ENCODE measurements at regions of chr9 and their contacts with region 1.

Region 1: GRCh38 chr9:83538172-83538889 is at the start of gene FRMD3:
- DNase-seq: peak; percentile 36
- ATAC-seq: peak; percentile 80
- H3K4me3 Mint-ChIP-seq: peak within 1 kb of the TSS; percentile 31
- H3K27ac Mint-ChIP-seq: no peak within 1 kb of the TSS
- H3K4me1 Mint-ChIP-seq: no peaks in the 10 kb centered on the region
- H3K27me3 Mint-ChIP-seq: peaks cover 25% of the 10 kb centered on the region
- CTCF ChIP-seq: peak; percentile 34
- total RNA-seq, gene FRMD3: 0.27 to 1.1 TPM

Region 2: DNA sequence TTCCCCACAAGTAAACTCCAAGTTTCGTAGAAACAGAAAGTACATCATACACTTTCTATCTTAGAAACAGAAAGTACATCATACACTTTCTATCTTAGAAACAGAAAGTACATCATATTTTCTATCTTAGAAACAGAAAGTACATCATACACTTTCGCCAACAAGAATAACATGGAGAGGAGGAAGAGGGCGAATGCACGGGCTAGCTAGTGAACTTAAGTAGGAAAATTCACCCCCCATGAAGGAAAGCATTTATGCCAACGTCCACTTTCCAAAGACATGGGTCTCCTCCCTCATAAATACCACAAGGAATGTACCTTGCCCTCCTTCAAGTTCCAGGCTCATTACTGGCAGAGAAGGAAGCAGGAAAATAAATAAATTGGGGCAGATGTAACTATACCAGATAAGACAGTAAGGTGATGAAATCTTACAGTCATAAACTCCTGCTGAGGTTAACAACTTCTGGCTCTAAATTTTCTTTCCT is 64.8 kb before region 1 on chr9:
- CTCF ChIA-PET with region 1: no interaction called
- POLR2A ChIA-PET with region 1: no interaction called
- intact Hi-C with region 1: loop called (anchors 10 kb)
- DNase-seq: peak; percentile 12
- ATAC-seq: peak; percentile 95
- H3K4me3 Mint-ChIP-seq: peak overlapping the region; percentile 49
- H3K27ac Mint-ChIP-seq: peak overlapping the region; percentile 67
- H3K4me1 Mint-ChIP-seq: peaks cover 22% of the 10 kb centered on the region
- H3K27me3 Mint-ChIP-seq: no peaks in the 10 kb centered on the region
- CTCF ChIP-seq: no peak

Region 3: DNA sequence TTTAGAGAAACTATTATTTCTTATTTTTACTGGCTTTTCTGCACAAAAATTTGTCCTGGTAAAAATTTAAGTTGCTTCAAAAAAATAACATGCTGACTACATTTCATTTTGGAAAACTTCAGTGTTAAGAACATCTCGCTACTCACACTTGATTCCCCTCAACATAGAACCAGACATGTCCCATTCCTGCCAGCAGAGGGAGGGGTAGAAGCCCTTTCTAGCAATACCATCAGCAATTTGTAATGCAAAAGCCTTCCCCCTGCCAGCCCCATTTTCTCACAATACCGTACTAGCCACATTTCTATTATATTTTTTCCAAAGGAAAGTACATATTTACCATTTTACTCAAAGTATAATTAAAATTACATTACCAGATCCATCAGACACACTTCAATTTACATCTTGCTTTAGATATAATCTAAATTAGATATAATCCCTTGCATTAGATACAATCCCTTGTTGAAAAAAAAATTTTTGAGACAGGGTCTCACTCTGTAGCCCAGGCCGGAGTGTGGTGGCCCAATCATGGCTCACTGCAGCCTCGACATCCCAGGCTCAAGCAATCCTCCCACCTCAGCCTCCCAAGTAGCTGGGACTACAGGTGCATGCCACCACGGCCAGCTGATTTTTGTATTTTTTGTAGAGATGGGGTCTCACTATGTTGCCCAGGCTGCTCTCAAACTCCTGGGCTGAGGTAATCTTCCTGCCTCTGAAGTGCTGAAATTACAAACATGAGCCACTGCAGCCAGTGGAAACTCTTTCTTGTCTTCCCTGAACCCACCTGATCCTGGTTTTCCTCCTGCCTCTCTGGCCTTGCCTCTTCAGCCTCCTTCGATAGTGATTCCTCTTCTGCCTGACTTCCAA is 45.1 kb after region 1 on chr9:
- CTCF ChIA-PET with region 1: no interaction called
- POLR2A ChIA-PET with region 1: no interaction called
- intact Hi-C with region 1: no loop called
- DNase-seq: peak; percentile 48
- ATAC-seq: no peak
- H3K4me3 Mint-ChIP-seq: no peak overlapping the region
- H3K27ac Mint-ChIP-seq: no peak overlapping the region
- H3K4me1 Mint-ChIP-seq: no peaks in the 10 kb centered on the region
- H3K27me3 Mint-ChIP-seq: no peaks in the 10 kb centered on the region
- CTCF ChIP-seq: peak; percentile 34

Region 4: GRCh38 chr9:83688921-83689320 is 150.6 kb after region 1 on chr9:
- CTCF ChIA-PET with region 1: no interaction called
- POLR2A ChIA-PET with region 1: no interaction called
- intact Hi-C with region 1: no loop called
- DNase-seq: no peak
- ATAC-seq: peak; percentile 91
- H3K4me3 Mint-ChIP-seq: no peak overlapping the region
- H3K27ac Mint-ChIP-seq: peak overlapping the region; percentile 60
- H3K4me1 Mint-ChIP-seq: peaks cover 69% of the 10 kb centered on the region
- H3K27me3 Mint-ChIP-seq: no peaks in the 10 kb centered on the region
- CTCF ChIP-seq: no peak

Measured in activated CD8-positive, alpha-beta T cell treated with anti-CD3 and anti-CD28 coated beads for 36 hours (primary cell).